BJ (cell line): ENCODE measurements at regions of chr9 and their contacts with region 1.

Region 1: DNA sequence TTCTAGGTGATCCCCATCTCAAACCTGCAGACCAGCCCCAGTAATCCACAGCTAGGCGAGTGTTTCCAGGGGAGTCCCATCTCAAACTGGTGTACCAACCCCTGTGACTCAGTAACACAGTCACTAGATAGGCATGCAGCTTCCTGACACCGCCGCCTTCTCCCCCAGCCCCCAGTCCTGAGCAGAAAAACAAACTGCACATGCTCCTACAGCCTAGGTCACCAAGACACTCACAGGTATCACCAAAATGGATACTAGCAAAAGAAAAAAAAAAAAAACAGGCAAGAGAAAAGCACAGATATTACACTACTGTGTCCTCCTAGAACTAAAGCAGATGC is 14.7 kb downstream of the SPTLC1 start:
- DNase-seq: peak; percentile 36
- H3K4me3 ChIP-seq: no peak overlapping the region
- H3K27me3 ChIP-seq: no peaks in the 10 kb centered on the region
- CTCF ChIP-seq: no peak

Region 2: DNA sequence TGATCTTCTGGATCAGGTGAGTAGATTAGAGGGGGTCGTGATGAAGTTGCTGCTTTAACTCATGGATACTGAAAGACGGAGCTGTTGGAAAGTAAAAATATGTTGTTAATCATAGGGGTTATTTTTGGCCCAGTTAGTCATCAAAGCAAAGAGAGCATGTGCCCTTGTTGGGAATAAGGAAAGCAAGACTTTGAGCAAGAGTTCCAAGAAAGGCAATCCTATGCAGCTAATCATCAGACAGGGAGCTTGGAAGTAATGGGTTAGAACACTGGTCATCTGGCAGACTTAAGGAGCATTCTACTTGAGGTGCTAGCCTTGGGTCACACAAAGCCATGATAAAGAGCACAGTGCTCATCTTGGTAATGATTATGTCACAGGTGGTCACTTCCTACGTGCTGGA is 363.4 kb after region 1 on chr9:
- CTCF ChIA-PET with region 1: no interaction called
- POLR2A ChIA-PET with region 1: no interaction called
- DNase-seq: peak; percentile 91
- H3K4me3 ChIP-seq: no peak overlapping the region
- H3K27me3 ChIP-seq: no peaks in the 10 kb centered on the region
- CTCF ChIP-seq: no peak

Region 3: DNA sequence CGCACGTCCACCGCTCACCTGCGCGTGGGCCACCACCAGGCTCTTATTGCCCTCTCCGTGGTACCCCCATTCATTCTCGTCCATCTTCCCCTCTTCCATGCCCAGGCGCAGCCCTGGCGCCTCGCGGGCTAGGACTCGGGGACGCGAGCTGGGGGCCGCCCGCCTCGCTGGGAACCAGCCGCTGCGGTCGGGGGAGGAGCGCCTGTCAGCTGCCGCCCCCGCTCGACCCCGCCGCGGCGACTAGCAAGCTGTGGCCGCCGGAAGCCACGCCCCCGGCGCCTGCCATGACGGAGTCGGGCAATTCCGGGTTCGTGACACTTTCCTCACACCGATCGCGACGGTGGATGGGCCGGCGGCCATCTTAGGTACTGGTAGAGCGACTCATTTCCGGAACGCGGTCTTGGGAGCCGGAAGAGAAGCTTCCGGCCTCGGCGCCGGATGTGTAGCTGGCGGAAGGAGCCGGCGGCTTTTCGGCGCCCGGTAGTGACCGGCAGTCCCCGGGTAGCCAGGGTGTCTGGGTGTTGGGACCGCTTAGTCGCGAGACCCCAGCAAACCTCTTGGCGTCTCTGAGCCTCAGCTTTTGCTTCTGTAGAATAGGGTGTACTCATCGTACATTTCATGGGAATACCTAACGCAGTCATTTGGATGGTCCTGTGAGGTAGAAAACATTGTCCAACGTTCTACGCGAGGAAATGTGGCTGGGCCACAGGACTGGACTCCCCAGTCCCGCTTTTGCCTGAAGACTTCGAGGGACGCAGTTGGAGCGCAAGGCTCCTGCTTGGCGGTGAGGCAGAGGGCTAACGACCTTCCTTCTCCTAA is 569.6 kb after region 1 on chr9 and contains the start of gene IPPK:
- CTCF ChIA-PET with region 1: no interaction called
- POLR2A ChIA-PET with region 1: interaction called, 16 read pairs
- DNase-seq: peak; percentile 93
- H3K4me3 ChIP-seq: peak within 1 kb of the TSS; percentile 87
- H3K27me3 ChIP-seq: no peaks in the 10 kb centered on the region
- CTCF ChIP-seq: no peak
- polyA plus RNA-seq, gene IPPK: 15.7 and 16.2 TPM in 2 replicates